ENCODE measurements at regions of chr2 and their contacts with region 1.

Region 1: GRCh38 chr2:176638167-176639015 is 369.1 kb downstream of the MTX2 start:
- DNase-seq: peak; percentile 41 to 77 (median 56)
- H3K4me3 ChIP-seq: peak overlapping the region; percentile 30 to 78 (median 62)
- H3K27ac ChIP-seq: peak overlapping the region in 1 of 59 donors; percentile 11
- H3K27me3 ChIP-seq: peaks cover 0 to 97% (median 73%) of the 10 kb centered on the region in 45 donors
- CTCF ChIP-seq: peak; percentile 50 to 86 (median 76)

Region 2: GRCh38 chr2:175690113-175690837 is 948.1 kb before region 1 on chr2:
- intact Hi-C with region 1: loop called in 1 of 2 experiments (anchors 10 kb)
- DNase-seq: peak in 2 of 10 donors; percentile 15 to 21
- H3K4me3 ChIP-seq: no peak overlapping the region
- H3K27ac ChIP-seq: no peak overlapping the region
- H3K27me3 ChIP-seq: peaks cover 0 to 66% (median 24%) of the 10 kb centered on the region in 45 donors
- CTCF ChIP-seq: peak in 55 of 56 donors; percentile 51 to 97 (median 81)

Region 3: GRCh38 chr2:176140513-176141317 is 497.7 kb before region 1 on chr2:
- intact Hi-C with region 1: loop called (anchors 1 to 5 kb)
- DNase-seq: peak in 9 of 10 donors; percentile 16 to 84 (median 55)
- H3K4me3 ChIP-seq: peak overlapping the region; percentile 20 to 77 (median 60)
- H3K27ac ChIP-seq: peak overlapping the region in 6 of 59 donors; percentile 32 to 74 (median 52)
- H3K27me3 ChIP-seq: peaks cover 4 to 99% (median 85%) of the 10 kb centered on the region in 45 donors
- CTCF ChIP-seq: peak; percentile 55 to 99 (median 92)

Region 4: GRCh38 chr2:176554101-176555048 is 84.0 kb before region 1 on chr2:
- intact Hi-C with region 1: loop called (anchors 10 kb)
- DNase-seq: peak in 3 of 10 donors; percentile 27 to 42 (median 31)
- H3K4me3 ChIP-seq: peak overlapping the region; percentile 21 to 77 (median 57)
- H3K27ac ChIP-seq: peak overlapping the region in 44 of 59 donors; percentile 9 to 83 (median 60)
- H3K27me3 ChIP-seq: peaks cover 0 to 55% (median 12%) of the 10 kb centered on the region in 45 donors
- CTCF ChIP-seq: peak; percentile 68 to 89 (median 81)

Region 5: DNA sequence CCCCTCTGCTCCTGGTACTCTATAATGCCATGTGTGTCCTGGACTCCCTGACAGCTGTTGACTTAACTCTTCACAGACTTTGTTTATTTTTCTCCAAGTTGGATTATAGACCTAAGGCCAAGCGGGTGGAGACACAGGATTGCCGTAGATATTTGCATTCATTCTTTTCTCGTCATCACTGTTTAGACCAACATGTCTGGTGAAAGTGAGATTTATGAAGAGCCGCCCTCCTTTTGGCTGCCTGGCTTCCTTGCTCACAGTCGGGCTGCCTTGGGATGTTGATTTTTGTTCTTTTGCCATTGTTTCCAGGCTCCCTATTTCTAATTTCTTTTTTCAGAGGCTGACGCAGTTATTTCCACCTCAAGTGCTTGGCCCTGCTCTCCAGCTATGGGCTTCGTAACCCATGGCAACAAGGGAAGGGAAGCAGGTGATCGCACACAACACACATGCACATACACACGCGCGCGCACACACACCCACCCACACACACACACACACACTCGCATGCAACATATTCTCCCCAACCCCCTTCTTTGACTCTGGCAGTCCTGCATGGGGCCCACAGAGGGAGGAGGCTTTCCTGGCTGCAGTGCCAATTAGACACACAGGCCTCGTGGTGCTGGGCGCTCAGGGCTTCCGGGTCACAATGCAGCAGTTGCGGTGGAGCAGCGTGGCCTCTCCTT is 72.6 kb before region 1 on chr2:
- intact Hi-C with region 1: no loop called
- DNase-seq: no peak
- H3K4me3 ChIP-seq: no peak overlapping the region
- H3K27ac ChIP-seq: no peak overlapping the region
- H3K27me3 ChIP-seq: peaks cover 0 to 52% (median 6%) of the 10 kb centered on the region in 45 donors
- CTCF ChIP-seq: no peak